Naive thymus-derived CD4-positive, alpha-beta T cell (primary cell): ENCODE measurements at regions of chr2 and their contacts with region 1.

Region 1: DNA sequence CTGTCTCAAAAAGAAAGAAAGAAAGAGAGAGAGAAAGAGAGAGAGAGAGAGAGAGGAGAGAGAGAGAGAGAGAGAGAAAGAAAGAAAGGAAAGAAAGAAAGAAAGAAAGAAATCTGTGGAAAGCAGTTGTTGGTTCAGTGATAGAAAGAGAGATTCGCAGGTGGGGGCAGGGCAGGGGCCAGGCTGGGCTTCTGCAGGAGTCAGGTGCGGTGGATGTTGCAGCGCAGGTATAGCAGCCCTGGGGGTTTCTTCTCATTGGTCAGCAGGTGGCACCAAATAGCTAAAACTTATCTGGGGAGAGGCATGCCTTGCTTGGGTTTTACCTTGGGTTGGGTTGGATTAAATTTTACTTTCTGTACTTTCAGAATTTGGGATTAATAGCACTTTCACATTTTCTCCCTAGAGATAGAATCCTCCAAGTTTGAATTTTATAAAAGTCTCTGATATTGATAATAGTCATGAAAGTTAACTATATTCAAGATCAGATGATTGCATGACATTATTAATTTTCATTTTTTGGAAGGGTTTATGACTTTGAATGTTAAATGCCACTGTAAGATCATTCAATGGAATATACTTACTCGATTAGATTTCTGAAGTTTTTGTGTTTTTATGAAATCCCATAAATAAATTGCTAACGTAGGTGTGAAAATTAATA is 66.6 kb downstream of the SPTBN1 start:
- DNase-seq: peak; percentile 34 to 83 (median 74)
- ATAC-seq: peak; percentile 97
- H3K4me3 ChIP-seq: no peak overlapping the region
- H3K4me3 Mint-ChIP-seq: peak overlapping the region in 4 of 10 donors; percentile 12 to 45 (median 30)
- H3K27ac ChIP-seq: no peak overlapping the region
- H3K27ac Mint-ChIP-seq: peak overlapping the region in 7 of 9 donors; percentile 29 to 90 (median 62)
- H3K4me1 ChIP-seq: no peaks in the 10 kb centered on the region
- H3K4me1 Mint-ChIP-seq: peaks cover 4 to 23% (median 10%) of the 10 kb centered on the region in 7 donors
- H3K27me3 ChIP-seq: no peaks in the 10 kb centered on the region
- H3K27me3 Mint-ChIP-seq: peaks cover 0 to 27% (median 0%) of the 10 kb centered on the region in 5 donors

Region 2: GRCh38 chr2:54558188-54559005 is 35.6 kb after region 1 on chr2:
- CTCF ChIA-PET with region 1: interaction called, 7 read pairs
- POLR2A ChIA-PET with region 1: interaction called, 6 read pairs
- intact Hi-C with region 1: loop called (anchors 1 kb)
- DNase-seq: peak; percentile 48 to 75 (median 64)
- ATAC-seq: peak; percentile 82
- H3K4me3 ChIP-seq: peak overlapping the region; percentile 94
- H3K4me3 Mint-ChIP-seq: peak overlapping the region; percentile 86 to 100 (median 98)
- H3K27ac ChIP-seq: peak overlapping the region; percentile 86
- H3K27ac Mint-ChIP-seq: peak overlapping the region; percentile 90 to 98 (median 96)
- H3K4me1 ChIP-seq: peaks cover 10 to 11% of the 10 kb centered on the region in 2 donors
- H3K4me1 Mint-ChIP-seq: peaks cover 29 to 65% (median 59%) of the 10 kb centered on the region in 7 donors
- H3K27me3 ChIP-seq: no peaks in the 10 kb centered on the region
- H3K27me3 Mint-ChIP-seq: no peaks in the 10 kb centered on the region

Region 3: DNA sequence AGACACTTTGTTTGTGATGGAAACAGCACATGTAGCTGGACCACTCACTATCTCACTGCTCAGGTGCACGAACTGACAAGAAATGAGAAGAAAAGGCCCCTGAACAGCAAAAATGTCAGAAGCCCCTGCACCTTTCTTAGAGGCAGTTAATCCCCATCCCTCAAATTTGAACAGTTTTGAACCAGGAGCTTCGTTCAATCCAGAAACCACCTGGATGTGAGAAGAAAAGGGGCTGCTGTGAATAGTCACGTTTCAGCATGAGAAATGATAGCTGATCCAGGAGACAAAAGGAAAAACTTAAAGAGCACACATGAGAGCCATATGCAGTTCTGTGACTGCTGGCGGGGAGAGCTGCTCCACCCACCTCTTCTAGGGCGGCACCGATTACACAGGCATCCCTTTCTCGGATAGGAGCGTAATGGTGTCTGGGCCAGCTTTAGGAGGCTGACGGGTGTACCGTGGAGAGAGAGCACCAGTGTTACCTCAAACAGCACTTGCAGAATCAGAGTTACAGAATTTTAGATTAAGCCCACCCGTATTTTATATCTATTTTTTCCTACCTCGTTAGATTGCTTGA is 83.7 kb after region 1 on chr2:
- CTCF ChIA-PET with region 1: interaction called, 4 read pairs
- POLR2A ChIA-PET with region 1: no interaction called
- intact Hi-C with region 1: loop called (anchors 2 kb)
- DNase-seq: peak in 6 of 9 donors; percentile 47 to 72 (median 58)
- ATAC-seq: peak; percentile 86
- H3K4me3 ChIP-seq: peak overlapping the region; percentile 1
- H3K4me3 Mint-ChIP-seq: peak overlapping the region; percentile 61 to 93 (median 74)
- H3K27ac ChIP-seq: peak overlapping the region; percentile 74
- H3K27ac Mint-ChIP-seq: peak overlapping the region; percentile 74 to 98 (median 96)
- H3K4me1 ChIP-seq: peaks cover 18 to 68% of the 10 kb centered on the region in 2 donors
- H3K4me1 Mint-ChIP-seq: peaks cover 79 to 94% (median 91%) of the 10 kb centered on the region in 7 donors
- H3K27me3 ChIP-seq: no peaks in the 10 kb centered on the region
- H3K27me3 Mint-ChIP-seq: no peaks in the 10 kb centered on the region

Region 4: DNA sequence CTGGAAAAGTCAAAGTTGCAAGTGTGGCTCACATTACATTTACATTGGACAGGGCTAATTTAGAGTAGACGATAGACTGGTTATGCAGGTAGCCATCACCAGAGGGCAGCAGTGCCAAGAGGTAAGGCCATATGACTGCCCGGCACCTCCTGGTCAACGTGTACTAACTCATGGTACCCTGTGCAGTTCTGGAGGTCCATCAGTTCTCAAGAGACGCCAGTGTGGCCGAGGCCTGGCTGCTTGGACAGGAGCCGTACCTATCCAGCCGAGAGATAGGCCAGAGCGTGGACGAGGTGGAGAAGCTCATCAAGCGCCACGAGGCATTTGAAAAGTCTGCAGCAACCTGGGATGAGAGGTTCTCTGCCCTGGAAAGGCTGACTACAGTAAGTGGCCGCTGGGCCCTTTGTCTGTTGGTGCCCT is 134.9 kb after region 1 on chr2:
- CTCF ChIA-PET with region 1: interaction called, 3 read pairs
- POLR2A ChIA-PET with region 1: no interaction called
- intact Hi-C with region 1: loop called (anchors 1 to 2 kb)
- DNase-seq: peak in 2 of 9 donors; percentile 17
- ATAC-seq: peak; percentile 74
- H3K4me3 ChIP-seq: no peak overlapping the region
- H3K4me3 Mint-ChIP-seq: peak overlapping the region in 2 of 10 donors; percentile 32 to 62
- H3K27ac ChIP-seq: no peak overlapping the region
- H3K27ac Mint-ChIP-seq: peak overlapping the region; percentile 33 to 94 (median 51)
- H3K4me1 ChIP-seq: no peaks in the 10 kb centered on the region
- H3K4me1 Mint-ChIP-seq: peaks cover 0 to 29% (median 0%) of the 10 kb centered on the region in 7 donors
- H3K27me3 ChIP-seq: no peaks in the 10 kb centered on the region
- H3K27me3 Mint-ChIP-seq: no peaks in the 10 kb centered on the region

Region 5: GRCh38 chr2:54838585-54839035 is 315.9 kb after region 1 on chr2:
- CTCF ChIA-PET with region 1: interaction called, 4 read pairs
- POLR2A ChIA-PET with region 1: no interaction called
- intact Hi-C with region 1: loop called (anchors 1 kb)
- DNase-seq: peak; percentile 25 to 61 (median 45)
- ATAC-seq: peak; percentile 87
- H3K4me3 ChIP-seq: no peak overlapping the region
- H3K4me3 Mint-ChIP-seq: no peak overlapping the region
- H3K27ac ChIP-seq: no peak overlapping the region
- H3K27ac Mint-ChIP-seq: no peak overlapping the region
- H3K4me1 ChIP-seq: no peaks in the 10 kb centered on the region
- H3K4me1 Mint-ChIP-seq: no peaks in the 10 kb centered on the region
- H3K27me3 ChIP-seq: no peaks in the 10 kb centered on the region
- H3K27me3 Mint-ChIP-seq: peaks cover 0 to 2% (median 0%) of the 10 kb centered on the region in 5 donors

Region 6: GRCh38 chr2:55175254-55176025 is 652.7 kb after region 1 on chr2:
- CTCF ChIA-PET with region 1: interaction called, 3 read pairs
- POLR2A ChIA-PET with region 1: no interaction called
- intact Hi-C with region 1: loop called in 1 of 2 experiments (anchors 1 kb)
- DNase-seq: peak in 7 of 9 donors; percentile 40 to 69 (median 63)
- ATAC-seq: peak; percentile 96
- H3K4me3 ChIP-seq: no peak overlapping the region
- H3K4me3 Mint-ChIP-seq: peak overlapping the region in 7 of 10 donors; percentile 0 to 49 (median 24)
- H3K27ac ChIP-seq: no peak overlapping the region
- H3K27ac Mint-ChIP-seq: peak overlapping the region in 5 of 9 donors; percentile 2 to 69 (median 46)
- H3K4me1 ChIP-seq: no peaks in the 10 kb centered on the region
- H3K4me1 Mint-ChIP-seq: peaks cover 0 to 10% (median 8%) of the 10 kb centered on the region in 7 donors
- H3K27me3 ChIP-seq: no peaks in the 10 kb centered on the region
- H3K27me3 Mint-ChIP-seq: no peaks in the 10 kb centered on the region